Tibial artery (tissue), 4 donors: ENCODE measurements at regions of chr4 and their contacts with region 1.

Region 1: DNA sequence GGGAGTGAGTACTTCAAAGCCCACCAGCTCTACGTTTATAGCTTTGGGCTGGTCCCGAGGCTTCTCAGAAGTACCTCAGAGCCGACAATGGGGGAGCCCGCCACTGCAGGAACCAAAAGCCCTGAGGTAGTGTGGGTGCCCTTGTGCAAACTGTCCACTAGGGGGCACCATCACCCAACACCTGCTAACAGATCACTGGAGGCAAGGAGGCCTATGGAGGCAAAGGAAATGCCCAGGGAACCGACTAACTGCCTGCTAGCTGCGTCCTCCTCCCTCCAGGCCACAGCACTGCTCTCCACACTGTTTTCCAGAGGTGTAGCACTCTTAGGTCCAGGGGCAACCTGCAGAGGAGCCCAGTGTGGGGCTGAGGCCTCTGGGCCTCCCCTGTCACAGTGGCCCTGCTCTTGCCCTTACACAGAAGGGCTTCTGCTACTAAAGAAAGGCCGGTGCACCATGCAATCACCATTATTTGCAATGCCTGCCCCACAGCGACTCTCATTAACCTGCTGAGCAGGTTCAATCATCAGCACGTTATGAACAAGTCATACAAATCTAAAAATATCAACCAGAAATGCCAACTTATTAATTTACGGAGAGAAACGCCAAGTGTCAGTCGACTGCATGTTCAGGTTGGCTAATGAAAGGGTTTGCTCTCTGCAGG is 159.1 kb downstream of the NSUN7 start:
- DNase-seq: peak; percentile 59 to 87
- H3K4me3 ChIP-seq: no peak overlapping the region
- H3K27ac ChIP-seq: peak overlapping the region; percentile 50 to 62
- H3K4me1 ChIP-seq: peaks cover 0 to 52% (median 32%) of the 10 kb centered on the region in 4 donors
- H3K27me3 ChIP-seq: no peaks in the 10 kb centered on the region
- CTCF ChIP-seq: peak; percentile 90

Region 2: GRCh38 chr4:40099010-40099409 is 809.8 kb before region 1 on chr4:
- intact Hi-C with region 1: no loop called
- DNase-seq: no peak
- H3K4me3 ChIP-seq: no peak overlapping the region
- H3K27ac ChIP-seq: no peak overlapping the region
- H3K4me1 ChIP-seq: no peaks in the 10 kb centered on the region
- H3K27me3 ChIP-seq: no peaks in the 10 kb centered on the region
- CTCF ChIP-seq: no peak

Region 3: DNA sequence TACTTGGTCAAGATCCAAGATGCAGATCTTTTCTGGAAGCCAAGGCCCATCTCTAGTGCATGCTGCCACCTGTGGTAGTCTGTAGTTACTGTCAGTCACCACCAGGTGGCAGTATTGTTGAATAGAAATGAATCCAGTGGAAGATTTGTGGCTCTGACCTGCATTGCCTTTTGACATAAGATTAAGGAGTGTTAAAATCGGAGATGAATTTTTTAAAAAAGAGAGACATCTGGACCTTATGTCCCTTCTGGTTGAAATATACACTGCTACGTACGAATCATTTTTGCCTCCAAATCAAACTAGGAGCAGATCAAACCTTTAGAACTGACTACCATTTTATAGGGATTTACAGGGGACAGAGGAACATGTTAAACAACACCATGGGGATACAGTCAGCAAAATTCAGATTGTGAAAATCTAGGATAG is 758.9 kb before region 1 on chr4:
- intact Hi-C with region 1: no loop called
- DNase-seq: peak; percentile 67 to 68
- H3K4me3 ChIP-seq: no peak overlapping the region
- H3K27ac ChIP-seq: no peak overlapping the region
- H3K4me1 ChIP-seq: no peaks in the 10 kb centered on the region
- H3K27me3 ChIP-seq: no peaks in the 10 kb centered on the region
- CTCF ChIP-seq: peak; percentile 69 to 70

Region 4: DNA sequence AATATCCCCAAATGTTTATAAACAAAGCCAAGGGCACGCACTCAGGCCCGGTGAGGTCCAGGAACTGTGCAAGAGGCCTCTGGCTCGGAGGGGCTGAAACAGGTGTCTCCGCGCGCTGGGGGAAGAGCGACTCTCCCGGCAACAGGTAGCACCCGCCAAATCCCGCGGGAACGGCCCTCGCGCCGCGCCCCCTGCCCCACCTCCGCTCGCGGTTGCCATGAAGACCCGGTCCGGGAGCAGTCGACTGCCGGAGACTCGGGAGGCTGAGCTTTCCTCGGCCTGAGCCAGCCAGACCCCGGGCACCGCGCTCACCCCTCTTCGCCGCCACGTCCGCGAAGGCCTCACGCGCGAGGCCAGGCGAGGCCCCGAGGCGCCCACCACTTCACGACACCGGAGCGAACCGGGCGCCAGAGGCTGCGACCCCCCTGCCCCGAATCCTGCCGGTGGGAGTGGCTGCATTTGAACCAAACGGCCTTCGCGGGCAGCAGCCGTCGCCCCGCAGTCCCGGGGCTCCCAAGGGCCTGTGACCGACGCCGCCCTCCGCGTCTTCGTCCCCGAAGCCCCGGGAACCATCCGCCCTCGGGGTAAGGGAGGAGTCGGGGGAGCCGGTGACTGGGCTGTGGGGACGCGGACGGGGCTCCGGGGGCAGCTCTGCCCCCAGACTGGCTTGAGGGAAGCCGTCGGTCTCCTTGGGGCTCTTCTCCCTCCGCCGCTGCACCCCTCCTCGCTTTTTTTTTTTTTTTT is 158.9 kb before region 1 on chr4 and contains the start of gene NSUN7:
- intact Hi-C with region 1: loop called (anchors 10 kb)
- DNase-seq: peak in 1 of 2 donors; percentile 80
- H3K4me3 ChIP-seq: peak within 1 kb of the TSS; percentile 65 to 77
- H3K27ac ChIP-seq: peak within 1 kb of the TSS; percentile 72 to 83
- H3K4me1 ChIP-seq: peaks cover 0 to 16% (median 2%) of the 10 kb centered on the region in 4 donors
- H3K27me3 ChIP-seq: no peaks in the 10 kb centered on the region
- CTCF ChIP-seq: no peak

Region 5: GRCh38 chr4:40763228-40763716 is 145.6 kb before region 1 on chr4:
- intact Hi-C with region 1: no loop called
- DNase-seq: no peak
- H3K4me3 ChIP-seq: no peak overlapping the region
- H3K27ac ChIP-seq: no peak overlapping the region
- H3K4me1 ChIP-seq: no peaks in the 10 kb centered on the region
- H3K27me3 ChIP-seq: no peaks in the 10 kb centered on the region
- CTCF ChIP-seq: no peak